Activated CD8-positive, alpha-beta T cell treated with anti-CD3 and anti-CD28 coated beads, Interleukin-2, amount 10 ng/mL, durations not matched to agents 7 days and 5 days (primary cell): ENCODE measurements at regions of chr13 and their contacts with region 1.

Region 1: GRCh38 chr13:50081679-50082425 is 66.6 kb downstream of the KCNRG start:
- DNase-seq: peak; percentile 99
- ATAC-seq: peak; percentile 79
- H3K4me3 Mint-ChIP-seq: peak overlapping the region; percentile 99
- H3K27ac Mint-ChIP-seq: peak overlapping the region; percentile 99
- H3K4me1 Mint-ChIP-seq: peaks cover 42% of the 10 kb centered on the region
- H3K27me3 Mint-ChIP-seq: no peaks in the 10 kb centered on the region

Region 2: DNA sequence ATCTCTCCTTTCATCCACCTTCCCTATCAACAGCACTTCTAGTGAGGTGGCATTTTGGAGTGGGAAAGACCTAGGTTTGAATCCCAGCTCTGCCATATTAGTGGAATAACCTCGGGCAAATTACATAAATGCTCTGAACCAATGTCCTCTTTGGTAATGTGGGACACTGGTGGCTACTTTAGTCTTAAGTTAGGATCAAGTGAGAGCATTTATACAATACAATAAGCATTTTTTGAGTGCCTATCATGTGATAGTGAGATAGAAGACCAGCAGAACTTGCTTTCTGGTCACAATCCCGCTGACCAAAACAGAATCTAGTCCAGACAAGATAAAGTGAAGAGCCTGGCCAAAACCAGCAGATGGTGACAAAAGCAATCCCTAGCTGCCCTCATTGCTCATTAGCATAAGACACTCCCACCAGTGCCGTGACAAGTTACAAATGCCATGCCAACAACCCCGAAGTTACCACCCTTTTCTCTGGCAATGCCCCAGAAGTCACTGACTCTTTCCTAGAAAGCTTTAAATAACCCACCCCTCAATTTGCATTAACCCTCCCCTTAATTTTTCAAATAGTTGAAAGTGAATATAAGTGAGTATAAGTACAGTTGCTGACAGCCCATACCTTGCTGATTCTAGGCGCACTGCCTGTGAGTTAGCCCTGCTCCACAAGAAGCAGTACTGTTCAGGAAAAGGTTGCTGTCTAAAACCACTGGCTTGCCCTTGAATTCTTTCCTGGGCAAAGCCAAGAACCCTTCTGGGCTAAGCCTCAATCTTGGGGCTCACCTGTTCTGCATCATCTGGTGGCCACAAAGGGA is 260.4 kb before region 1 on chr13:
- CTCF ChIA-PET with region 1: no interaction called
- POLR2A ChIA-PET with region 1: no interaction called
- DNase-seq: no peak
- ATAC-seq: no peak
- H3K4me3 Mint-ChIP-seq: no peak overlapping the region
- H3K27ac Mint-ChIP-seq: no peak overlapping the region
- H3K4me1 Mint-ChIP-seq: no peaks in the 10 kb centered on the region
- H3K27me3 Mint-ChIP-seq: peaks cover 12% of the 10 kb centered on the region

Region 3: DNA sequence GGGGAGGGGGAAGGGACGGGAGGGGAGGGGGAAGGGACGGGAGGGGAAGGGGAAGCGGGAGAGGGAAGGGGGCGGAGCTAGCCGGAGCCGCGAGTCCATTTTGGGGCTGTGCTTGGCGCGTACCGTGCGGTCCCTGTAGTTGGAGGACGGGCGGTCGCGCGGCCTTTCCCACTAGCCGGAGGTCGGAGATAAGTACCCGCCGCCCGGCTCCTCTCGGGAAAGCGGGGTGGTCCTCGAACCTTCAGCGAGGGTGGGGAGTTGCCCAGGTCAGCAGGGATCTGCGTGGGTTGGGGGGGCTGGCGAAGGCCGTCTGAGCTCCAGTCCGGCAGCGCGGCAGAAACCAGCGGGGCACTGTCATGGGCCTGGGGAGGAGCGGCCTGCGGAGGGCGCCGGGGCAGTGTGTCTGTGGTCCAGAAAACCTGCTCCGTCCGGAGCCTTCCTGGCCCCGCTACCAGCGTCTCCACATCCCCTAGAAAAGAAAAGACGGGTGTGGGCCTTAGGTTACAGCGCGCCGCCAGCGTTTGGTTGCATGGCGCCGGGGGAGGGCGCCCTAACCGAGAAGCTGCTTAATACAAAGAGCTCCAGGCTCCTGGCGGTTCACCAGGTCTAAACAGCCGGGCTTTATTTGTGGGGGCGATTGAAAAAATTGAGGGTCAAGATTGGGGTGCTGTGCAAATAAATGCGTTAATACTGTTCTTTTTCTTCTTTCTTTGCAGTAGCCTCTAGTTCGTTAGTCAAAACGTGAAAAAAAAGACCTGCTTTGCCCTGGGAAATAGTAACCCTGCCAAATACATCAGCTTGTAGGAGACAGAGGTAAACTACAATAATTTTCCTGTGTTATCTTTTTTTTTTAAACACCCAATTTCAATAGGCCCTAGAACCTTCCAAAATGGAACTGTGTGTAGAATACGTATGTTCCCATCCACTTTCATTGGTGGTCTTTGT is 84.6 kb before region 1 on chr13 and contains the start of gene TRIM13:
- CTCF ChIA-PET with region 1: interaction called, 26 read pairs
- POLR2A ChIA-PET with region 1: interaction called, 63 read pairs
- DNase-seq: peak; percentile 89
- ATAC-seq: peak; percentile 87
- H3K4me3 Mint-ChIP-seq: peak within 1 kb of the TSS; percentile 84
- H3K27ac Mint-ChIP-seq: peak within 1 kb of the TSS; percentile 91
- H3K4me1 Mint-ChIP-seq: peaks cover 32% of the 10 kb centered on the region
- H3K27me3 Mint-ChIP-seq: no peaks in the 10 kb centered on the region
- total RNA-seq, gene TRIM13: 11.8 to 12.0 TPM

Region 4: GRCh38 chr13:50106559-50106958 is 24.7 kb after region 1 on chr13:
- CTCF ChIA-PET with region 1: interaction called, 16 read pairs
- POLR2A ChIA-PET with region 1: interaction called, 4 read pairs
- DNase-seq: no peak
- ATAC-seq: peak; percentile 42
- H3K4me3 Mint-ChIP-seq: no peak overlapping the region
- H3K27ac Mint-ChIP-seq: peak overlapping the region; percentile 82
- H3K4me1 Mint-ChIP-seq: peaks cover 22% of the 10 kb centered on the region
- H3K27me3 Mint-ChIP-seq: no peaks in the 10 kb centered on the region

Region 5: DNA sequence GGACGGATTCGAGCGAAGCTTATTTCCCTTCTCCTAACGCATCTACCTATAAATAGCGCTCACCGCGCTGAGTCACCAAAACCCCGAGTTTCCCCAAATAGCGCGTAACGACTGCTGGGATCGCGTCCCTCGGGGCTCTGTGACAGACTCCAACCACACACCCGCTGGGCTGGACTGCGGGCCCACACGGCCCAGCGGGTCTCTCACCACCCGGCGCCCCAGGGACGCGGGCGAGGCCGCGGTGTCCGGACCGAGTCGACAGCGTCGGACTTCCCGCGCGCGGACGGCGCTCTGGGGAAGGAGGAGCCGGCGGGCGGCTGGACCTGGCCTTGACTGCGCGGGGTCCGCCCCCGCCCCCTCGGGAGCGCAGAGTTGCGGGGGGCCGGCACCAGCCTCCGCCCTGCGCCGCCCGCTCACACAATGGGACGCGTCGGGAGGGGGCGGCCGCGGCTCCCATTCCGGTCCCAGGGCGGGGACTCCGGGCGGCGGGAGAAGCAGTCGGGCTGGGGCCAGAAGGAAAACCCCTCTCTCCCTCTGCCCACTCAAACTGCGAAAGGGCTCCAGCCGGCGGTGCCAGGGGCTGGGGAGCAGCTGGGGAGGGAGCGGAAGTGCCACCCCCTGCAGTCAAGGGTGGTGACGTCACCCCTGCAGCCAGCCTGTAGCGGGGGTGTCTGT is 42.1 kb after region 1 on chr13:
- CTCF ChIA-PET with region 1: interaction called, 89 read pairs
- POLR2A ChIA-PET with region 1: interaction called, 240 read pairs
- DNase-seq: peak; percentile 76
- ATAC-seq: peak; percentile 74
- H3K4me3 Mint-ChIP-seq: peak overlapping the region; percentile 84
- H3K27ac Mint-ChIP-seq: peak overlapping the region; percentile 90
- H3K4me1 Mint-ChIP-seq: peaks cover 47% of the 10 kb centered on the region
- H3K27me3 Mint-ChIP-seq: peaks cover 7% of the 10 kb centered on the region

Region 6: GRCh38 chr13:50140581-50141374 is 58.9 kb after region 1 on chr13:
- CTCF ChIA-PET with region 1: no interaction called
- POLR2A ChIA-PET with region 1: no interaction called
- DNase-seq: no peak
- ATAC-seq: no peak
- H3K4me3 Mint-ChIP-seq: no peak overlapping the region
- H3K27ac Mint-ChIP-seq: no peak overlapping the region
- H3K4me1 Mint-ChIP-seq: peaks cover 6% of the 10 kb centered on the region
- H3K27me3 Mint-ChIP-seq: peaks cover 16% of the 10 kb centered on the region

Region 7: GRCh38 chr13:50309882-50310594 is 228.2 kb after region 1 on chr13:
- CTCF ChIA-PET with region 1: no interaction called
- POLR2A ChIA-PET with region 1: no interaction called
- DNase-seq: no peak
- ATAC-seq: peak; percentile 49
- H3K4me3 Mint-ChIP-seq: no peak overlapping the region
- H3K27ac Mint-ChIP-seq: no peak overlapping the region
- H3K4me1 Mint-ChIP-seq: peaks cover 14% of the 10 kb centered on the region
- H3K27me3 Mint-ChIP-seq: peaks cover 6% of the 10 kb centered on the region

Region 8: DNA sequence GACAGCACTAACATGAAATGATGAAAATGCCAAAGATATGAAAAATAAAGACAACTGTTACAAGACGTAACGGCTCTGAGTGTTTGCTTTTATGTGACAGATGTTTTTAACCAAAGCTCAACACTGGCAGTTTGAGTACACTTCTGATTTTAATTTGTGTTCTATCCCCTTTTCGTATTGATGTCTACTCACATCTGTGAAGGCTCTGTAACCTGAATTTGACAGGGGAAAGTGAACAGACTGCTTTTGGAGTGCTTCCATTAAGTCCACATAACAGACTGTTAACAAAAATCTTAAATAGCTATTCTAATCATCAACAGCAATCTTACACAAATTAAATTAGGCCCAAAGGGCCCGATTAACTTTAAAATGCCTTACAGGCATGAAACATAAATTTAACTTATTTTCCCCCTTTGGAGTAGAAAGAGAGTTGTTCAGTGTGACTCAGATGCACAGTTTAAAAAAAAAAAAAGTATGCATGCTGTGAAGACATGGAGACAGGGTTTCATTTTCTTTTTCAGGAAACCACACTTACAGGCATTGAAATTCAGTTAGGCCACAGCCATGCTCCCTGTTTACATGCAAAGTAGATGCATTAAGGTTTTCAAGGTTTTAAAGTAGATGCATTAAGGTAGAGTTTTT is 811.5 kb after region 1 on chr13:
- CTCF ChIA-PET with region 1: no interaction called
- POLR2A ChIA-PET with region 1: interaction called, 21 read pairs
- DNase-seq: peak; percentile 61
- ATAC-seq: peak; percentile 94
- H3K4me3 Mint-ChIP-seq: peak overlapping the region; percentile 62
- H3K27ac Mint-ChIP-seq: peak overlapping the region; percentile 94
- H3K4me1 Mint-ChIP-seq: peaks cover 52% of the 10 kb centered on the region
- H3K27me3 Mint-ChIP-seq: no peaks in the 10 kb centered on the region